Spleen (tissue), 13 donors: ENCODE measurements at regions of chr6 and their contacts with region 1.

Region 1: GRCh38 chr6:46419576-46420002 is 71.7 kb downstream of the RCAN2 start:
- DNase-seq: no peak
- H3K4me3 ChIP-seq: no peak overlapping the region
- H3K27ac ChIP-seq: no peak overlapping the region
- H3K4me1 ChIP-seq: peaks cover 0 to 7% (median 3%) of the 10 kb centered on the region in 6 donors
- H3K27me3 ChIP-seq: no peaks in the 10 kb centered on the region
- CTCF ChIP-seq: peak; percentile 13 to 77 (median 61)
- POLR2A ChIP-seq: no peak

Region 2: GRCh38 chr6:46207174-46207573 is 212.4 kb before region 1 on chr6:
- intact Hi-C with region 1: no loop called
- DNase-seq: no peak
- H3K4me3 ChIP-seq: no peak overlapping the region
- H3K27ac ChIP-seq: no peak overlapping the region
- H3K4me1 ChIP-seq: no peaks in the 10 kb centered on the region
- H3K27me3 ChIP-seq: no peaks in the 10 kb centered on the region
- CTCF ChIP-seq: no peak
- POLR2A ChIP-seq: no peak

Region 3: DNA sequence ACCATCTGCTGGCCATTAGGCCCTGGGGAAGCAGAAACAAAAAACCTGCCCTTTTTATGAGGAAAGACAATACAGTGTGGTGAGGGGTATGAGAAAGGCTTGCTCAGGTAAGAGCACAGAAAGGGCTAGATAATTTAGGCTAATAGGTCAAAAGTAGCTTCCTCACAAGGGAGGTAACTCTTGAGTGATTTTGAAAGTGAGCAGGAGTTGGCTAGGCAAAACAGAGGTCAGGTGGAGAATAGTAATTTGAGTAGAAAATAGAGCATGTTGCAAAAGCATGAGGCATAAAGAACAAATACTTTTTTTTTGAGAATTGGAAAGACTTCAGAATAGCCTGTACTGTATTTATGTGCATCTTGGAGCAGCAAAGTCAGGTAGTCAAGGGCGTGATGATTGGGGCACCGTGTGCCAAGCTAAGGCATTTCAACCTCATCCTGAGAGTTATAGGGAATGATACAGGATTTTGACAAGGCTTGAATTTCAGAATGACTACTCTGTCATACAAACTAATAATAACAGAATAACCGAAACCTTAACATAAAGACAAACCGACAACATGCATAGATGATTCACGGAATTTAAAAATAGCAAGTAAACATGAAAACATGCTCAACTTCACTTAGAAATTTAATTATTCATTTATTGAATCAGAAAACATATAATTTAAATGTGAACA is 125.8 kb before region 1 on chr6:
- intact Hi-C with region 1: no loop called
- DNase-seq: no peak
- H3K4me3 ChIP-seq: no peak overlapping the region
- H3K27ac ChIP-seq: no peak overlapping the region
- H3K4me1 ChIP-seq: peaks cover 0 to 4% (median 0%) of the 10 kb centered on the region in 6 donors
- H3K27me3 ChIP-seq: no peaks in the 10 kb centered on the region
- CTCF ChIP-seq: no peak
- POLR2A ChIP-seq: no peak

Region 4: DNA sequence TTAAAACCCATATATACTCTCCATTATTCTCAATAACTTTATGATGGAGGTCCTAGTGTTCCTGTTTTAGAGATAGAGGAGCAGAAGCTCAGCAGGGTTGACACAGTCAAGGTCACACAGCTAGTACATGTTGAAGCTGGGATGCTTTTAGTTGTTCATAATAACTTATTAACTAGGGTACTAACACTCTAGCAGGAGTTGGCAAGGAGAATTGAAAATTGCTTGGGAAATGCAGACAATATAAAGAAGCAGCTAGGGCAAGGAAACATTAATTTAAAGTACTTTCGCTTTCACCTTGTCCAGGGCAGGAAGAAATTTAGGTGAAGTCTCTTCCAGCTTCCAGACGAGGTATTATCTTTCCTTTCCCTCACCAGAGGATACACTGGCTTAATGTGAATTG is 62.0 kb before region 1 on chr6:
- intact Hi-C with region 1: no loop called
- DNase-seq: no peak
- H3K4me3 ChIP-seq: peak overlapping the region in 1 of 8 donors; percentile 7
- H3K27ac ChIP-seq: no peak overlapping the region
- H3K4me1 ChIP-seq: peaks cover 0 to 11% (median 6%) of the 10 kb centered on the region in 6 donors
- H3K27me3 ChIP-seq: no peaks in the 10 kb centered on the region
- CTCF ChIP-seq: no peak
- POLR2A ChIP-seq: no peak

Region 5: DNA sequence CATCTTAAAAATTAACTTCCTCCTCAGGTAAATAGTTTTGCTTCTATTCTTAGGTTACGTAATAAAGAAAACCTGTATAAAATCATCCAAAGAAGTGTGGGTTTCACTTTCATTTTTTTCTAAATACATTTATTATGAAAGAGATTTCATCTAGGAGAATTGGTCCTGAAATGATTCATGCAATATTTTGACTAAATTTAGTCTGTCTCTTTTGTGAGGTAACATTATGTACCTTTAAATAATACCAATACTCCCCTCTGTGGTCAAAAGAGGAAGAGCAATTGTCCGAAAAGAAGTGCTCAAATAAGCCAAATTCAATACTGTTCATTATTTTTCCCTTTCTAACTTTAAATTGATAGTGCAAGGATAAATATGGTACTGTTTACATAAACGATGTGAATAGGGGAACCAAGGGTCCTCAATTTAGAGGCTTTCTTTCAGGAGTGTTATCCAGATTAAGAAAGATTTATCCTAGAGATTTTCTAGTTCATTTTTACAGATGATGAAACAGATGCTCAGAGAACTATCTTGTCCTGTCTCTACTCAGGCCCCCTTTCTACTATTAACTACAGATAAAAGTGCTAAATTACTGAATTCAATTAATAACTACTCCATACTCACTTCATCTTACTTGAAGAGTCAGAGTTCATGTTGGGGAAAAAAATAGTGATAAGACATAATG is 206.8 kb after region 1 on chr6:
- intact Hi-C with region 1: loop called (anchors 10 kb)
- DNase-seq: no peak
- H3K4me3 ChIP-seq: no peak overlapping the region
- H3K27ac ChIP-seq: no peak overlapping the region
- H3K4me1 ChIP-seq: peaks cover 0 to 10% (median 7%) of the 10 kb centered on the region in 6 donors
- H3K27me3 ChIP-seq: no peaks in the 10 kb centered on the region
- CTCF ChIP-seq: peak in 10 of 11 experiments; percentile 35 to 72 (median 52)
- POLR2A ChIP-seq: no peak